Activated naive CD8-positive, alpha-beta T cell treated with anti-CD3 and anti-CD28 coated beads, Interleukin-2, amount 10 ng/mL, durations not matched to agents 7 days and 5 days (primary cell): ENCODE measurements at regions of chr1 and their contacts with region 1.

Region 1: GRCh38 chr1:12448746-12449177 is 169.2 kb downstream of the DHRS3 start:
- DNase-seq: no peak
- ATAC-seq: no peak
- H3K4me3 Mint-ChIP-seq: peak overlapping the region; percentile 84
- H3K27ac Mint-ChIP-seq: peak overlapping the region; percentile 98
- H3K4me1 Mint-ChIP-seq: peaks cover 84% of the 10 kb centered on the region
- H3K27me3 Mint-ChIP-seq: no peaks in the 10 kb centered on the region

Region 2: GRCh38 chr1:12477936-12478611 is 29.3 kb after region 1 on chr1:
- POLR2A ChIA-PET with region 1: interaction called, 36 read pairs
- DNase-seq: peak; percentile 55
- ATAC-seq: peak; percentile 37
- H3K4me3 Mint-ChIP-seq: peak overlapping the region; percentile 79
- H3K27ac Mint-ChIP-seq: peak overlapping the region; percentile 91
- H3K4me1 Mint-ChIP-seq: peaks cover 86% of the 10 kb centered on the region
- H3K27me3 Mint-ChIP-seq: no peaks in the 10 kb centered on the region